BJ (cell line): ENCODE measurements at regions of chr20 and their contacts with region 1.

Region 1: GRCh38 chr20:50824193-50824632 is 29.4 kb downstream of the BCAS4 start:
- DNase-seq: peak; percentile 64
- H3K4me3 ChIP-seq: no peak overlapping the region
- H3K27me3 ChIP-seq: no peaks in the 10 kb centered on the region
- CTCF ChIP-seq: no peak

Region 2: DNA sequence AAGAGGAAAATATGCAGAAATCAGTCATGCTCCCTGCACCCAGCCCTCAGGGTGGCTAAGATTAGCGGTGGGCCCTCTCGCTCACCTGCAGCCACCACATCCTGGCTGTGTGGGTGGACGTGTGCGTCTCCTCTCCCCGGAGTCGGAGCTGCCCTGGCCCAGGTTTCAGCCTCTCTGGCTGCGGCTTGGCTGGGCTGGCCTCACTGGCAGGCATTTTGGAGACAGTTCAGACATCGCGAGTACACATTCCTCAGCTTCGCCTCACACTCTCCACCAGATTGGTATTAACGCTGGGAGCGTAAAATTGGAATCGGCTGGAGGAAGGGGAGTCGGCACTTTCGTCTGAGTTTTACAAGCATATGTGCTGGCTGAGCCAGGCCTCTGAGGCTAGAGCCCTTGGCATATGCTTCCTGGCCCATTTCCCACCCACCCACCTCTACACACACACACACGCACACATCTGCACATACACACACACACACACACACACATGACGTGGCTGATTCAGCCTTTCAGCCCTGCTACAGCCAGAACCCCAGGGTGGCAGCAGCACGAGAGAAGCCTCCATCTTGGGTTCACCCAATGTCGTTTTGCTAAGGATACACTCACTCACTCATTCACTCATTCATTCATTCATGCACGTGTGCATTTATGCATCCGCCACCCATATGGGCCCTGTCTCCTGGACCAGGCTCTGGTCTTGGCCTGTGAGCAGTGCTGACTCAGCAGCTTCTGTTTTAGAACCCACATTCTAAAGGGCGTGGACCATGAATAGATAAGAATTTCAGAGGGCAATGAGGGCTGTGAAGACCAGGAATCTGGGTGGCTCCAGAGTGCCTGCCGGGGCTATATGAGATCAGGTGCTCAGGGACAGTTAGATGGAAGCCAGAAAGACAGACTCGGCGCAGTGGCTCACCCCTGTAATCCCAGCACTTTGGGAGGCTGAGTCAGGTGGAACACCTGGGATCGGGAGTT is 13.6 kb after region 1 on chr20:
- CTCF ChIA-PET with region 1: interaction called, 6 read pairs
- POLR2A ChIA-PET with region 1: interaction called, 15 read pairs
- DNase-seq: peak; percentile 95
- H3K4me3 ChIP-seq: no peak overlapping the region
- H3K27me3 ChIP-seq: no peaks in the 10 kb centered on the region
- CTCF ChIP-seq: no peak